Caco-2 (cell line): ENCODE measurements at regions of chr5 and their contacts with region 1.

Region 1: GRCh38 chr5:148443998-148444397 is 60.2 kb downstream of the FBXO38 start:
- DNase-seq: peak in 1 of 2 experiments; percentile 63
- H3K4me3 ChIP-seq: no peak overlapping the region
- H3K4me3 Mint-ChIP-seq: no peak overlapping the region
- H3K27ac Mint-ChIP-seq: no peak overlapping the region
- H3K4me1 ChIP-seq: no peaks in the 10 kb centered on the region
- H3K4me1 Mint-ChIP-seq: no peaks in the 10 kb centered on the region
- H3K27me3 ChIP-seq: no peaks in the 10 kb centered on the region
- H3K27me3 Mint-ChIP-seq: no peaks in the 10 kb centered on the region
- CTCF ChIP-seq: peak; percentile 67 to 76

Region 2: DNA sequence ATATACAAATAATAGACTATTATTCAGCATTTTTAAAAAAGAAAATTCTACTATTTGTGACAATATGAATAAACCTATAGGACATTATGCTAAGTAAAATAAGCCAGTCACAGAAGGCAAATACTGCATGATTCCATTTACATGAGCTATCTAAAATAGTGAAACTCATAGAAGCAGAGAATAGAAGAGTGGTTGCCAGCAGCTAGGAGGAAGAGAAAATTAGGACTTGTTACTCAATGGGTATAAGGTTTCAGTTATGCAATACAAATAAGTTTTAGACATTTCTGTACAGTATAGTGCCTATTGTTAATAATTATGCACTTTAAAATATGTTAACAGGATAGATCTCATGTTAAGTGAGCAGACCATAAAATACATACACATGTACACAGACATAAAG is 454.0 kb before region 1 on chr5:
- CTCF ChIA-PET with region 1: no interaction called
- POLR2A ChIA-PET with region 1: no interaction called
- intact Hi-C with region 1: no loop called
- DNase-seq: no peak
- H3K4me3 ChIP-seq: no peak overlapping the region
- H3K4me3 Mint-ChIP-seq: no peak overlapping the region
- H3K27ac Mint-ChIP-seq: no peak overlapping the region
- H3K4me1 ChIP-seq: no peaks in the 10 kb centered on the region
- H3K4me1 Mint-ChIP-seq: no peaks in the 10 kb centered on the region
- H3K27me3 ChIP-seq: no peaks in the 10 kb centered on the region
- H3K27me3 Mint-ChIP-seq: no peaks in the 10 kb centered on the region
- CTCF ChIP-seq: no peak

Region 3: GRCh38 chr5:148186248-148186996 is 257.6 kb before region 1 on chr5:
- CTCF ChIA-PET with region 1: no interaction called
- POLR2A ChIA-PET with region 1: no interaction called
- intact Hi-C with region 1: loop called (anchors 10 kb)
- DNase-seq: no peak
- H3K4me3 ChIP-seq: no peak overlapping the region
- H3K4me3 Mint-ChIP-seq: no peak overlapping the region
- H3K27ac Mint-ChIP-seq: no peak overlapping the region
- H3K4me1 ChIP-seq: no peaks in the 10 kb centered on the region
- H3K4me1 Mint-ChIP-seq: peaks cover 8% of the 10 kb centered on the region
- H3K27me3 ChIP-seq: no peaks in the 10 kb centered on the region
- H3K27me3 Mint-ChIP-seq: peaks cover 4% of the 10 kb centered on the region
- CTCF ChIP-seq: no peak

Region 4: GRCh38 chr5:148482691-148483462 is 38.9 kb after region 1 on chr5:
- CTCF ChIA-PET with region 1: no interaction called
- POLR2A ChIA-PET with region 1: no interaction called
- intact Hi-C with region 1: loop called (anchors 2 kb)
- DNase-seq: peak; percentile 38 to 58
- H3K4me3 ChIP-seq: no peak overlapping the region
- H3K4me3 Mint-ChIP-seq: no peak overlapping the region
- H3K27ac Mint-ChIP-seq: no peak overlapping the region
- H3K4me1 ChIP-seq: no peaks in the 10 kb centered on the region
- H3K4me1 Mint-ChIP-seq: peaks cover 7% of the 10 kb centered on the region
- H3K27me3 ChIP-seq: no peaks in the 10 kb centered on the region
- H3K27me3 Mint-ChIP-seq: peaks cover 28% of the 10 kb centered on the region
- CTCF ChIP-seq: peak; percentile 40 to 51

Region 5: GRCh38 chr5:148542812-148543211 is 98.8 kb after region 1 on chr5:
- CTCF ChIA-PET with region 1: no interaction called
- POLR2A ChIA-PET with region 1: no interaction called
- intact Hi-C with region 1: no loop called
- DNase-seq: no peak
- H3K4me3 ChIP-seq: no peak overlapping the region
- H3K4me3 Mint-ChIP-seq: no peak overlapping the region
- H3K27ac Mint-ChIP-seq: no peak overlapping the region
- H3K4me1 ChIP-seq: no peaks in the 10 kb centered on the region
- H3K4me1 Mint-ChIP-seq: no peaks in the 10 kb centered on the region
- H3K27me3 ChIP-seq: no peaks in the 10 kb centered on the region
- H3K27me3 Mint-ChIP-seq: peaks cover 22% of the 10 kb centered on the region
- CTCF ChIP-seq: no peak

Region 6: GRCh38 chr5:148585988-148586387 is 142.0 kb after region 1 on chr5:
- CTCF ChIA-PET with region 1: no interaction called
- POLR2A ChIA-PET with region 1: no interaction called
- intact Hi-C with region 1: loop called (anchors 5 kb)
- DNase-seq: no peak
- H3K4me3 ChIP-seq: no peak overlapping the region
- H3K4me3 Mint-ChIP-seq: no peak overlapping the region
- H3K27ac Mint-ChIP-seq: no peak overlapping the region
- H3K4me1 ChIP-seq: peaks cover 5% of the 10 kb centered on the region
- H3K4me1 Mint-ChIP-seq: peaks cover 8% of the 10 kb centered on the region
- H3K27me3 ChIP-seq: no peaks in the 10 kb centered on the region
- H3K27me3 Mint-ChIP-seq: peaks cover under 1% of the 10 kb centered on the region
- CTCF ChIP-seq: peak in 1 of 2 experiments; percentile 13

Region 7: DNA sequence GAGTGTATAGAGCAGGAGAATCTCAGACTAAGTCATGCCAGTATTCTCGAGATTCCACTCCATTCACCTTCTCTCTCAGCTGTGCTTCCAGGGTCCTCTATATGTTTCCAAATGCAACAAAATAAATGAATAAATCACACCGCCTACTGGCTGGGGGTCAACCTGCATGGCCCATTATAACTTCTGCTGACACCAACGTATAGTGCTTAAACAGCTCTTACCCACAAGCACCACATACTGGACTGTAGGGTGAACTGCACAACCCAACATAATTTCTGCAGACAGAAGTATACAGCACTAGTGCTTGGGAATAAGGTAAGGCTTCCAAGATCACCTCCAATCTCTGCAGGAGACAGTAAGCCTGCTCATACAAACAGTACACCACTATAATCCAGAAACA is 243.4 kb after region 1 on chr5:
- CTCF ChIA-PET with region 1: interaction called, 6 read pairs
- POLR2A ChIA-PET with region 1: no interaction called
- intact Hi-C with region 1: loop called (anchors 1 kb)
- DNase-seq: peak; percentile 47 to 56
- H3K4me3 ChIP-seq: no peak overlapping the region
- H3K4me3 Mint-ChIP-seq: no peak overlapping the region
- H3K27ac Mint-ChIP-seq: no peak overlapping the region
- H3K4me1 ChIP-seq: no peaks in the 10 kb centered on the region
- H3K4me1 Mint-ChIP-seq: no peaks in the 10 kb centered on the region
- H3K27me3 ChIP-seq: no peaks in the 10 kb centered on the region
- H3K27me3 Mint-ChIP-seq: no peaks in the 10 kb centered on the region
- CTCF ChIP-seq: peak; percentile 67 to 70